Activated CD4-positive, alpha-beta T cell treated with anti-CD3 and anti-CD28 coated beads for 36 hours (primary cell): ENCODE measurements at regions of chr19 and their contacts with region 1.

Region 1: GRCh38 chr19:49497047-49497788 is 984 bp downstream of the RPS11 start:
- DNase-seq: peak; percentile 86
- ATAC-seq: peak; percentile 5
- H3K4me3 Mint-ChIP-seq: peak overlapping the region; percentile 93
- H3K27ac Mint-ChIP-seq: peak overlapping the region; percentile 98
- H3K4me1 Mint-ChIP-seq: peaks cover 47% of the 10 kb centered on the region
- H3K27me3 Mint-ChIP-seq: no peaks in the 10 kb centered on the region

Region 2: GRCh38 chr19:49391581-49392399 is 105.4 kb before region 1 on chr19:
- CTCF ChIA-PET with region 1: no interaction called
- POLR2A ChIA-PET with region 1: no interaction called
- intact Hi-C with region 1: no loop called
- DNase-seq: peak; percentile 90
- ATAC-seq: peak; percentile 83
- H3K4me3 Mint-ChIP-seq: no peak overlapping the region
- H3K27ac Mint-ChIP-seq: no peak overlapping the region
- H3K4me1 Mint-ChIP-seq: peaks cover 16% of the 10 kb centered on the region
- H3K27me3 Mint-ChIP-seq: no peaks in the 10 kb centered on the region

Region 3: DNA sequence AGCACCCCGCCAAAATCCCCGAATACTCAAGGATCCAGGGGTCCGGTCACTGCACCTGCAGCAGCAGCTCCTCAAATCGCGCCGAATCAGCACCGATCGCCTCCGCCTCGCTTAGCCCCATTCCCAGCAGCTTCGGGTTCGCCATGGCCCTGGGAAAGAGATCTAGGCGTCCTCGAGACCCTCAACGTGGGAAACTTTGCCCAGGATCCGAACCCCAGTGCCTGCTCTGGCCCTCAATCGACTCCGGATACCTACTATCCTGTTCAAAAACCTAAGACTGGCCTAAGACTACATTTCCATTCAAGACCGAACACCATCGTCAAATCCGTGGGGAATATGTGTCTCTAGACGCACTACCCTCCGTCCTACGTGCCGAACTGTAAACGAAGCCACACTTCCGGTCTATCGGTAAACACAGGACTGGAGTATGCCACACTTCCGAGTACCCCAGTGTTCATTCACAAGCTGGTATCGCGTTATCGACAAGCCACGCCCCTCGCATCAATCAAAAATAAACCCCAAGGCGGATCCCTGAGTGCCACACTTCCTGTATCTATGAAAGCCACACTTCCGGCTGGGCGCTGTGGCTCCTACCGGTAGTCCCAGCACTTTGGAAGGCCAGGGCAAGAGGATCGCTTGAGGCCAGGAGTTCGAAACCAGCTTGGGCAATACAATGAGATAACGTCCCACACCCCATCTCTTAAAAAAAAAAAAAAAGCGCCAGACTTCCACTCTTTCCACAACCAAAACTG is 45.6 kb before region 1 on chr19 and contains the start of gene PIH1D1:
- CTCF ChIA-PET with region 1: interaction called, 3 read pairs
- POLR2A ChIA-PET with region 1: interaction called, 12 read pairs
- intact Hi-C with region 1: loop called (anchors 1 to 2 kb)
- DNase-seq: peak; percentile 98
- ATAC-seq: peak; percentile 71
- H3K4me3 Mint-ChIP-seq: peak within 1 kb of the TSS; percentile 100
- H3K27ac Mint-ChIP-seq: peak within 1 kb of the TSS; percentile 100
- H3K4me1 Mint-ChIP-seq: peaks cover 50% of the 10 kb centered on the region
- H3K27me3 Mint-ChIP-seq: no peaks in the 10 kb centered on the region
- total RNA-seq, gene PIH1D1: 117 to 138 TPM

Region 4: GRCh38 chr19:49473868-49474544 is 23.2 kb before region 1 on chr19 and contains the start of gene FLT3LG:
- CTCF ChIA-PET with region 1: interaction called, 6 read pairs
- POLR2A ChIA-PET with region 1: interaction called, 6 read pairs
- intact Hi-C with region 1: loop called in 1 of 2 experiments (anchors 1 kb)
- DNase-seq: peak; percentile 94
- ATAC-seq: peak; percentile 47
- H3K4me3 Mint-ChIP-seq: peak within 1 kb of the TSS; percentile 73
- H3K27ac Mint-ChIP-seq: peak within 1 kb of the TSS; percentile 84
- H3K4me1 Mint-ChIP-seq: peaks cover 58% of the 10 kb centered on the region
- H3K27me3 Mint-ChIP-seq: no peaks in the 10 kb centered on the region
- total RNA-seq, gene FLT3LG: 38.6 to 43.2 TPM

Region 5: GRCh38 chr19:49555600-49556411 is 58.6 kb after region 1 on chr19:
- CTCF ChIA-PET with region 1: interaction called, 3 read pairs
- POLR2A ChIA-PET with region 1: interaction called, 5 read pairs
- intact Hi-C with region 1: loop called in 1 of 2 experiments (anchors 2 kb)
- DNase-seq: peak; percentile 92
- ATAC-seq: peak; percentile 62
- H3K4me3 Mint-ChIP-seq: peak overlapping the region; percentile 35
- H3K27ac Mint-ChIP-seq: peak overlapping the region; percentile 98
- H3K4me1 Mint-ChIP-seq: peaks cover 82% of the 10 kb centered on the region
- H3K27me3 Mint-ChIP-seq: no peaks in the 10 kb centered on the region

Region 6: DNA sequence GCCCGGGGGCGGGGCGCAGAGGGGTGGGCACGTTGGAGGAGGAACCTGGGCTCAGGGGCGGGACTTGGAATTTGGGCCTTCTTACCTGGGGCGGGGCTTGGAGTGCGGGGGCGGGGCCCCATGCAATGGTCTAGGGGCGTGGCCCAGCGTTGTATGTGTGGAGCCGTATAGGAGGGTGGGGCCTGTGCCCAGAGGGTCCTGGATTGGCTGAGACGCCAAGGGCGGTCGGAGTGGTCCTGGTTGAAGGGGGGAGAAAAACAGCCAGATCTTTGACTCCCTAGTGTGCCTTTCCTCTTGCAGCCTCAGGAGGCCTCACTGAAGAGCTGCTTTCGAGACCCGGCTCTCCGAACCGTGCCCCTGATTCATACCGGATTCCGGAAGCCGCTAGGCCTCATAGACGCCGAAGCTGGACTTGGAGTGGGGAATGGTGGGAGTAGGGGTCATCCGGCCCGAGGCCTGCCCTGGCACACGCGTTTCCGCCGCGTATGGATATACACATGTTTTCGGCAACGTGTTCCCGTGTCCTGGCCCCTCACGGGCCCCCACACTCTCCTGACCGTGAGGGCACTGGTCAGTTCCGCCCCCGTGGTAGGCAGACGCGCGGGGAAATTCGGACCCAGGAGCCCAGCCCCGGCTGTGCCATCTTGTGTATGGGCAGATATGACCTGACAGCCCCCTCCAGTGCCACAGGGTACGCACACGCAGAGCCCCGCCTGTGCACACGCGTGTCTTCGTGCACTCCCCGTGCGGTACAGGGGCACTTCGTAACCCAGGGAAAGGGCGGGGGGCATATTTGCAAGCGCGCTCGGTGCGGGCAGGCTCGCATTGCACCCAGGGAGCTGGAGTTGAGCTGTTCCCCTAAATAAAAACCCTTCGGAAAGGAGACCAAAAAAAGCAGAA is 93.1 kb after region 1 on chr19:
- CTCF ChIA-PET with region 1: interaction called, 3 read pairs
- POLR2A ChIA-PET with region 1: interaction called, 3 read pairs
- intact Hi-C with region 1: loop called (anchors 1 kb)
- DNase-seq: peak; percentile 98
- ATAC-seq: peak; percentile 80
- H3K4me3 Mint-ChIP-seq: peak overlapping the region; percentile 79
- H3K27ac Mint-ChIP-seq: peak overlapping the region; percentile 84
- H3K4me1 Mint-ChIP-seq: peaks cover 28% of the 10 kb centered on the region
- H3K27me3 Mint-ChIP-seq: no peaks in the 10 kb centered on the region

Region 7: DNA sequence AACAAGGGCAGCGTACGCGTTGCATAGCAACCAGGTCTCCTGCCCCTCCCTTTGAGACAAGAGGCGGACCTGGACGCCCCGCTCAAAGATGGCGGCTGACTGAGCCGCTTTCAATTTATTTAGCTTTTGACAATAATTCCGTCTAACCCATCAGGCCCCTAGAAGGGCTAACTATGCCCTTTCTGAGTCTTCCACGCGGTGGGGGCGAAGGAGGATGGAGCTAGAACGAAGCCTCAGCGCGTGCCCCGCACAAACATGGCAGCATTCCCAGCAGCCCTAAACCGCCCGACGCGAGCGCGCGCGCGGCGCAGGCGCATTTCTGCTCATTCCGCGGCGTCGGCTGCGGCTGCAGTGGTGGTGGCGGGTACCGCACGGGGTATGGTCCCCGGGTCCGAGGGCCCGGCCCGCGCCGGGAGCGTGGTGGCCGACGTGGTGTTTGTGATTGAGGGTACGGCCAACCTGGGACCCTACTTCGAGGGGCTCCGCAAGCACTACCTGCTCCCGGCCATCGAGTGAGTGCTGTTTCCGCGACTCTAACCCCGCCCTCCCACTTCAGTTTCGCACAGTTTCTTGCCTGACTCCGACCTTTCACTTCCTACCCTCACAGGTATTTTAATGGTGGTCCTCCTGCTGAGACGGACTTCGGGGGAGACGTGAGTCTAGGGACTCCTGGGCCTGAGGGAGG is 320.9 kb after region 1 on chr19 and contains the start of gene MED25:
- CTCF ChIA-PET with region 1: interaction called, 3 read pairs
- POLR2A ChIA-PET with region 1: no interaction called
- intact Hi-C with region 1: loop called (anchors 2 to 5 kb)
- DNase-seq: peak; percentile 91
- ATAC-seq: peak; percentile 75
- H3K4me3 Mint-ChIP-seq: peak within 1 kb of the TSS; percentile 87
- H3K27ac Mint-ChIP-seq: peak within 1 kb of the TSS; percentile 99
- H3K4me1 Mint-ChIP-seq: peaks cover 26% of the 10 kb centered on the region
- H3K27me3 Mint-ChIP-seq: no peaks in the 10 kb centered on the region
- total RNA-seq, gene MED25: 39.6 to 49.9 TPM

Region 8: GRCh38 chr19:49869441-49870176 is 372.4 kb after region 1 on chr19:
- CTCF ChIA-PET with region 1: no interaction called
- POLR2A ChIA-PET with region 1: interaction called, 4 read pairs
- intact Hi-C with region 1: loop called in 1 of 2 experiments (anchors 2 kb)
- DNase-seq: peak; percentile 94
- ATAC-seq: peak; percentile 87
- H3K4me3 Mint-ChIP-seq: no peak overlapping the region
- H3K27ac Mint-ChIP-seq: no peak overlapping the region
- H3K4me1 Mint-ChIP-seq: peaks cover 39% of the 10 kb centered on the region
- H3K27me3 Mint-ChIP-seq: no peaks in the 10 kb centered on the region